ENCODE measurements at regions of chr3 and their contacts with region 1.

Region 1: GRCh38 chr3:16048435-16049318 is 125.8 kb upstream of the GALNT15 start:
- DNase-seq: no peak
- ATAC-seq: peak; percentile 86
- H3K4me3 Mint-ChIP-seq: no peak overlapping the region
- H3K27ac Mint-ChIP-seq: no peak overlapping the region
- H3K4me1 Mint-ChIP-seq: no peaks in the 10 kb centered on the region
- H3K27me3 Mint-ChIP-seq: peaks cover 2% of the 10 kb centered on the region
- CTCF ChIP-seq: peak; percentile 27

Region 2: GRCh38 chr3:16177962-16178627 is 129.4 kb after region 1 on chr3:
- CTCF ChIA-PET with region 1: interaction called, 5 read pairs
- POLR2A ChIA-PET with region 1: no interaction called
- intact Hi-C with region 1: loop called (anchors 1 kb)
- DNase-seq: peak; percentile 39
- ATAC-seq: peak; percentile 68
- H3K4me3 Mint-ChIP-seq: no peak overlapping the region
- H3K27ac Mint-ChIP-seq: no peak overlapping the region
- H3K4me1 Mint-ChIP-seq: peaks cover 8% of the 10 kb centered on the region
- H3K27me3 Mint-ChIP-seq: peaks cover 18% of the 10 kb centered on the region
- CTCF ChIP-seq: no peak

Region 3: GRCh38 chr3:16211176-16211904 is 162.7 kb after region 1 on chr3:
- CTCF ChIA-PET with region 1: no interaction called
- POLR2A ChIA-PET with region 1: no interaction called
- intact Hi-C with region 1: no loop called
- DNase-seq: no peak
- ATAC-seq: no peak
- H3K4me3 Mint-ChIP-seq: no peak overlapping the region
- H3K27ac Mint-ChIP-seq: no peak overlapping the region
- H3K4me1 Mint-ChIP-seq: no peaks in the 10 kb centered on the region
- H3K27me3 Mint-ChIP-seq: peaks cover 7% of the 10 kb centered on the region
- CTCF ChIP-seq: no peak

Region 4: DNA sequence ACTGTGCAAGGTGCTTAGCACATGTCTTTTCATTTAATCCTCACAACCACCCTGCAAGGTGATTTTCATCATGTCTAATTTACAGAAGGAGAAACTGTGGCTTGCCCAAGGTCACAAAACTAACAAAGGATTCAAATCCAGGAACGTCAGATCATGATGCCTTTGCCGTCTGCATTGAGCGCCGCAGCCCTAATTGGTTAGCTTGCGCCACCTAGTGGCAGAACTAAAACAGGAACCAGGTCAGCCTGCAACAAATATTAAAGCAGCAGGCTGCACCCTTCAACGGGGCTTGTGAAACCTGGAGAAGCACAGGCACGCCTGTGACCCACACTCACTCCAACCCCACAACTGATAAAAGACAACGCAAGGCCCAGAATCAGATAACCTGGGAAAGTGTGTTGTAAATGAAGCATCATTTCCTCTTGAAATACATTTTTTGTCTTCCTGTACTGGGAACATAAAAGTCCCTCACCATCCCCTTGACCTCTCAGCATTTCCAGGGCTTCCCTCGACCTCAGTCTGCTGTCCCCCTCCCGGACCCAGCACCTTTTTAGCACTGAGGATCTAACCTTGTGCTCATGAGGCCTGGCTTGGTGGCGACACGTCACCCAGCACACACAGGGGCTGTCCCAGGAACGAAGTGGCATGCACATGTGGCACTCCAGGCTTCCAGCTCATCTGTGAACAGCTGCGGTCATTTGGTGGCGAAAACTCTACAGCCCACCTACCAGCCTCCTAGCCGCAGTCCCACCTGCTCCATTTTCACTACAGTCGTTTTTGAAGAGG is 198.8 kb after region 1 on chr3:
- CTCF ChIA-PET with region 1: interaction called, 10 read pairs
- POLR2A ChIA-PET with region 1: no interaction called
- intact Hi-C with region 1: loop called (anchors 1 kb)
- DNase-seq: peak; percentile 43
- ATAC-seq: peak; percentile 90
- H3K4me3 Mint-ChIP-seq: no peak overlapping the region
- H3K27ac Mint-ChIP-seq: no peak overlapping the region
- H3K4me1 Mint-ChIP-seq: peaks cover 18% of the 10 kb centered on the region
- H3K27me3 Mint-ChIP-seq: peaks cover 9% of the 10 kb centered on the region
- CTCF ChIP-seq: peak; percentile 87

Measured in activated B cell treated with CpG ODN at 0.5 μM for 24 hours (primary cell).